WTC11 (cell line): ENCODE measurements at regions of chr9 and their contacts with region 1.

Region 1: GRCh38 chr9:105414947-105415661 is 32.7 kb upstream of the FSD1L start:
- DNase-seq: peak; percentile 75
- ATAC-seq: peak; percentile 88
- H3K4me3 Mint-ChIP-seq: peak overlapping the region; percentile 65
- H3K27ac Mint-ChIP-seq: no peak overlapping the region
- H3K4me1 Mint-ChIP-seq: peaks cover 25% of the 10 kb centered on the region
- H3K27me3 Mint-ChIP-seq: peaks cover 17% of the 10 kb centered on the region
- CTCF ChIP-seq: peak; percentile 86; the same call in 1 of the 2 replicates

Region 2: DNA sequence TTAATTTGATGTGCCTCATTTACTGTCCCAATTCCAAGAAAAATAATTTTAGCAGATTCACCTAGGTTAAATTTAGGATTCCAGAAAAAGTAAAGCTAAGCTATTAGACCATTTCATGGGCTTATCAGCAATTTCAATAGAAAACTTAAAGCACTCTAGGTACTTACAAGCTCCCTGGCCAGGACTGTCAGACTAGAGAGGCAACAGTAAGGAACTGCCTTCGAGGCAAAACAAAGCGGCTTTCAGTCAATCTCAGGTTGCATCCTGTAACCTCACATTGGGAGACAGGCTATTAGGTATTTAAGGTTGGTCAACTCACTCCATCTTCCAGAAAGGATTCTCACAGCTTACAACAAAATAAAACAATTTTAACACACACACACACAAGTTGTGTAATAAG is 16.0 kb before region 1 on chr9:
- CTCF ChIA-PET with region 1: interaction called, 10 read pairs
- POLR2A ChIA-PET with region 1: no interaction called
- DNase-seq: no peak
- ATAC-seq: peak; percentile 32
- H3K4me3 Mint-ChIP-seq: no peak overlapping the region
- H3K27ac Mint-ChIP-seq: no peak overlapping the region
- H3K4me1 Mint-ChIP-seq: peaks cover 57% of the 10 kb centered on the region
- H3K27me3 Mint-ChIP-seq: no peaks in the 10 kb centered on the region
- CTCF ChIP-seq: no peak